Activated naive CD4-positive, alpha-beta T cell treated with anti-CD3 and anti-CD28 coated beads for 36 hours (primary cell): ENCODE measurements at regions of chr12 and their contacts with region 1.

Region 1: GRCh38 chr12:52884526-52885293 is 20.2 kb downstream of the KRT8 start:
- DNase-seq: peak; percentile 89
- H3K4me3 Mint-ChIP-seq: no peak overlapping the region
- H3K27ac Mint-ChIP-seq: no peak overlapping the region
- H3K4me1 Mint-ChIP-seq: peaks cover 5% of the 10 kb centered on the region
- H3K27me3 Mint-ChIP-seq: no peaks in the 10 kb centered on the region

Region 2: GRCh38 chr12:52278541-52279421 is 605.9 kb before region 1 on chr12:
- CTCF ChIA-PET with region 1: no interaction called
- intact Hi-C with region 1: no loop called
- DNase-seq: peak; percentile 78
- H3K4me3 Mint-ChIP-seq: no peak overlapping the region
- H3K27ac Mint-ChIP-seq: no peak overlapping the region
- H3K4me1 Mint-ChIP-seq: peaks cover 3% of the 10 kb centered on the region
- H3K27me3 Mint-ChIP-seq: peaks cover 12% of the 10 kb centered on the region

Region 3: GRCh38 chr12:52903855-52904508 is 19.3 kb after region 1 on chr12:
- CTCF ChIA-PET with region 1: interaction called, 15 read pairs
- intact Hi-C with region 1: no loop called
- DNase-seq: peak; percentile 25
- H3K4me3 Mint-ChIP-seq: peak overlapping the region; percentile 51
- H3K27ac Mint-ChIP-seq: no peak overlapping the region
- H3K4me1 Mint-ChIP-seq: peaks cover 5% of the 10 kb centered on the region
- H3K27me3 Mint-ChIP-seq: no peaks in the 10 kb centered on the region

Region 4: GRCh38 chr12:52920937-52921826 is 36.5 kb after region 1 on chr12:
- CTCF ChIA-PET with region 1: interaction called, 11 read pairs
- intact Hi-C with region 1: no loop called
- DNase-seq: no peak
- H3K4me3 Mint-ChIP-seq: no peak overlapping the region
- H3K27ac Mint-ChIP-seq: no peak overlapping the region
- H3K4me1 Mint-ChIP-seq: no peaks in the 10 kb centered on the region
- H3K27me3 Mint-ChIP-seq: no peaks in the 10 kb centered on the region

Region 5: DNA sequence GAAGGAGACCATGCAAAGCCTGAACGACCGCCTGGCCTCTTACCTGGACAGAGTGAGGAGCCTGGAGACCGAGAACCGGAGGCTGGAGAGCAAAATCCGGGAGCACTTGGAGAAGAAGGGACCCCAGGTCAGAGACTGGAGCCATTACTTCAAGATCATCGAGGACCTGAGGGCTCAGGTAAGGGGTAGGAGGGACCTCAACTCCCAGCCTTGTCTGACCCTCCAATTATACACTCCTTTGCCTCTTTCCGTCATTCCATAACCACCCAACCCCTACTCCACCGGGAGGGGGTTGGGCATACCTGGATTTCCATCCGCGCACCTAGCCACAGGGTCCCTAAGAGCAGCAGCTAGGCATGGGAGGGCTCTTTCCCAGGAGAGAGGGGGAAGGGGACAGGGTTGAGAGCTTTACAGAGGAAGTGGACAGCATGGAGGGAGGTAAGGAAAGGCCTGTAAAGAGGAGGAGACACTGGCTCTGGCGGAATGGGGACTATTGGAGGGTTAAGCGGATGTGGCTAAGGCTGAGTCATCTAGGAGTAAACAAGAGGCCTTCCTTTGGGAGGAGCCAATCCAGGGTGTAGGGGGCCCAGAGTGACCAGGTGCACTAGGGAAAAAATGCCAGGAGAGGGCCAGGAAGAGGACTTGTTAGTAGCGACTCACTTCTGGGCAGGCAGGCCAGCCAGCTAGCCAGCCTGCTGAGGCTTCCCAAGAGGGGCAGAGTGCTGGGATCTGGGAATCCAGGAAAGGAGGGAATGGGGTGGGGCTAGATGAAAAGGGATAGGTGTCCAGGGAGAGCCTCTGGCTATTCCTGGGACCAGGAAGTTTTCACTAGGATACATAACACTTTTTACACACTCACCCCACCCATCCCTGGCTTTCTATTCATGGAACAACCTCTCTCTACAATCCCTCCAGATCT is 65.0 kb after region 1 on chr12:
- CTCF ChIA-PET with region 1: interaction called, 26 read pairs
- intact Hi-C with region 1: no loop called
- DNase-seq: no peak
- H3K4me3 Mint-ChIP-seq: peak overlapping the region; percentile 48
- H3K27ac Mint-ChIP-seq: no peak overlapping the region
- H3K4me1 Mint-ChIP-seq: peaks cover 3% of the 10 kb centered on the region
- H3K27me3 Mint-ChIP-seq: no peaks in the 10 kb centered on the region

Region 6: GRCh38 chr12:52969828-52970569 is 85.3 kb after region 1 on chr12:
- CTCF ChIA-PET with region 1: interaction called, 20 read pairs
- intact Hi-C with region 1: no loop called
- DNase-seq: no peak
- H3K4me3 Mint-ChIP-seq: no peak overlapping the region
- H3K27ac Mint-ChIP-seq: no peak overlapping the region
- H3K4me1 Mint-ChIP-seq: no peaks in the 10 kb centered on the region
- H3K27me3 Mint-ChIP-seq: peaks cover 4% of the 10 kb centered on the region

Region 7: DNA sequence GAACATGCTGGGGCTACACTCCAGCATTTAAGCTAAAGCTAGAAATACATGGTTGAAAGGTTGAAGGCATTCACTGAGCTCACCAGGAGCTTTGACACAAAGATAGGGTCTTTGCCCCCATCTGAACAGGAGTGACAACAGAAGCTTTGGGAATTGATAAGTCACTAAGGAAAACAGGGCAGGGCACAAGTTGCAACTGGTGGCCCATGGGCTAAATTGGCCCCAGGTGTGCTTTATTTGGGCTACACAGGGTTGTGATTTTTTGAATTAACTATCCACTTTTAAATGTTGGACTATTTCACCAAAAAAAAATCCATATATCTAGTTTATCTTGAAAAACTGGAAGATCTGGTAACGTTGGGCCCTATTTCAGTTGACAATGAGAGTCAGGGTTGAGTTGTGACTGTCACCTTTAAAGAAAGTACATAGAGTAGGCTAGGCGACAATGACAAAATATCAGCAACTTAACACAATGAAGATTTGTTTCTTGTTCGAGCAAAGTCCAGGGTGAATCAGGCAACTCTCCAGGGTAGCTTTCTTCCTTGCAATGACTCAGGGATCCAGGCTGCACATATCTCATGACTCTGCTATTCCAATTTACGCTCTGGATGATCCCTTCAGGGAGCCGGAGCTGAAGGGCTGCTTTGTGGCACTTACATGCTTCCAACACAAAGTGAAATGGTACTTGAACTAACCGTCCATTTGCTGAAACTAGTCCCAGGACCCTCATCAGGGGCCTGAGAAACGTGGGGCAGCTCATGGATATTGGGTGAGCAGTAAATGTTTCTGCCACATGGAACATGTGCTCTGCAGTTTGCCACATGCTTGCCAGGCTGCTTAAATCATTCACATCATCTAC is 108.2 kb after region 1 on chr12:
- CTCF ChIA-PET with region 1: interaction called, 37 read pairs
- intact Hi-C with region 1: no loop called
- DNase-seq: no peak
- H3K4me3 Mint-ChIP-seq: no peak overlapping the region
- H3K27ac Mint-ChIP-seq: no peak overlapping the region
- H3K4me1 Mint-ChIP-seq: no peaks in the 10 kb centered on the region
- H3K27me3 Mint-ChIP-seq: no peaks in the 10 kb centered on the region

Region 8: DNA sequence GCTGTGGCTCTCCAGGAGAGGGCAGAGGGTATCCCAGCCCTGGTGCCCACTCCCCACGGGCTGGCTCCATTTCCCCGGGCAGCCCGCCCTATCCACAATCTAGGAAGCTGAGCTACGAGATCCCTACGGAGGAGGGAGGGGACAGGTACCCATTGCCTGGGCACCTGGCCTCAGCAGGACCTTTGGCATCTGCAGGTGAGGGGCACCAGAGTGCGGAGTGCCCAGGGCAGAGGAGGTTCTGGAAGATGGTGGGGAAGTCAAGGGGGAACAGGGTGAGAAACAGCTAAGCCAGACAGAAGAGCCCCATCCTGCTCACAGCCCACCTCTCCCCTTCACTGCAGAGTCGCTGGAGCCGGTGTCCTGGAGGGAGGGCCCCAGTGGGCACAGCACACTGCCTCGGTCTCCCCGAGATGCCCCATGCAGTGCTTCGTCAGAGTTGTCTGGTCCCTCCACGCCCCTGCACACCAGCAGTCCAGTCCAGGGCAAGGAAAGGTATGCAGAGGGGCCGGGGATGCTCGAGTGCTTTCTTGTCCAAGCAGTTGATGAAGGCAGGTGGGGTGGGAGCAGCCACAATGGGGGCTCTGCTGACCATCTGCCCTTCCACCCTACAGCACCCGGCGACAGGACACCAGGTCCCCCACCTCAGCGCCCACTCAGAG is 175.5 kb after region 1 on chr12:
- CTCF ChIA-PET with region 1: no interaction called
- intact Hi-C with region 1: no loop called
- DNase-seq: no peak
- H3K4me3 Mint-ChIP-seq: no peak overlapping the region
- H3K27ac Mint-ChIP-seq: no peak overlapping the region
- H3K4me1 Mint-ChIP-seq: no peaks in the 10 kb centered on the region
- H3K27me3 Mint-ChIP-seq: no peaks in the 10 kb centered on the region